MCF 10A (cell line): ENCODE measurements at regions of chr10 and their contacts with region 1.

Region 1: DNA sequence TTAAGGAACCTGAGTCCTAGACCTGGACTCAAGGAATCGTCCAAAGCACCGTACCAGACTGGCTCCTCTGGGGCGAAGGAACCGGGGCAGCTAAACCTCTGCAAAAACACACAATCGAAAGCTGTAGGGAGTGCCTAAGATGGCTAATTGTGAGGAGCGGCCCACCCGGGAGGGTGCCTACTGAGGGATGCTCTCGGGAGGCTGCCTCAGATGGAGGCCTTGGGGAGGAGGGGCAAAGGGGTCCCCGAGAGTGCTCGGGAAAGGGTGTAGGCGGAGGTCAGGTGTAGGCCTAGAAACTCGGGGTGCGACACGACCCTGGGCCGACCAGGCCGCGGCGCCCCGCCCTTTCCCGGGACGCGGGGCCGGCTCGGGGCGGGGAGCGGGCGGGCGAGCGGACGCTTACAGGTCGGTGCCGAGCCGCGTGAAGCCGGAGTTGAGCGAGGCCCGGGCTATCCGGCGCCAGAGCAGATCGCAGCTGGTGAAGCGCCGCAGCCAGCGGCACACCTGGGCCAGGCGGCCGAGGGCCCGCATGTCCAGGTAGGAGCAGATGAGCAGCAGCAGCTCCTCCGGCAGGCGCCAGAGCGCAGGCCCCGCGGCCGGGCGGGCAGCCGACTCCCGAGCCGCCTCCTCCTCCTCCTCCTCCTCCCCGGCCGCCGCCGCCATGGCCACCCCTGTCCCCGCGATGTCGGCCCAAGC is 844 bp downstream of the FBXW4 start:
- DNase-seq: peak; percentile 59
- H3K4me3 Mint-ChIP-seq: peak overlapping the region; percentile 93
- H3K27ac Mint-ChIP-seq: peak overlapping the region; percentile 99
- H3K4me1 Mint-ChIP-seq: peaks cover 23% of the 10 kb centered on the region
- H3K27me3 Mint-ChIP-seq: no peaks in the 10 kb centered on the region
- CTCF ChIP-seq: no peak

Region 2: DNA sequence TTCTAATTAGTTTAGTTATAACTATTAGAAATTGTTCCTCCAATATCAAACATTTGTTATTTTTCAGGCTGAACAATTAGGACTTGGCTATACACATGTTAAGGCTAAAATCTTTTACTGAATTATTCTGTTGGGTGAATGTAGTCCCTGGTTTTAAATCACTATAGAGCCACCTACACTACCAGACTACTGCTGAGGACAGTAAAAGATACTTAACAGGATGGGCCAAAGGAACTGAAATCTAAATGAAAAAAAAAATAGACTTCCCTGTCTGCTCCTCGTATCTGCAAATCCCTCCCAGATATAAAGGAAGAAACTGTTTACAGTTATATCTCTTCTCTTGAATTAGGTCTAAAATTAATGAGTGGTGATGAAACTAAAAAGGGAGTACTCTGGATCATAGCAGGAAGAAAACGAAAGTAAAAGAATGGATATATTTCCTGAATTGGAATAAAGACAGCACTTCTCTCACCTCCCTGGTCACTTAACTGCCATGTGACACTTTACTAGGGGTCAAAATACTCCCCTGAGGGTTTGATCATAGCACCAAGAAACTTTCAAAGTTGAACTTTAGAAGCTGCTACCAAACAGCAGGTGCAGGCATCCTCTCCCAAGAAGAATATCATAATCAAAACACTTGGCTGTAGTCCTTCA is 11.8 kb before region 1 on chr10:
- CTCF ChIA-PET with region 1: no interaction called
- POLR2A ChIA-PET with region 1: interaction called, 19 read pairs
- intact Hi-C with region 1: no loop called
- DNase-seq: no peak
- H3K4me3 Mint-ChIP-seq: peak overlapping the region; percentile 39
- H3K27ac Mint-ChIP-seq: no peak overlapping the region
- H3K4me1 Mint-ChIP-seq: peaks cover 18% of the 10 kb centered on the region
- H3K27me3 Mint-ChIP-seq: no peaks in the 10 kb centered on the region
- CTCF ChIP-seq: no peak